H1 (cell line): ENCODE measurements at regions of chr3 and their contacts with region 1.

Region 1: GRCh38 chr3:51670823-51671733 is at the start of gene TEX264:
- DNase-seq: peak in 1 of 2 experiments; percentile 82
- H3K4me3 ChIP-seq: peak within 1 kb of the TSS; percentile 59 to 82 (median 69)
- H3K27ac ChIP-seq: no peak within 1 kb of the TSS
- H3K4me1 ChIP-seq: peaks cover 0 to 10% (median 5%) of the 10 kb centered on the region in 4 experiments; a peak in 4 of 7 replicates
- H3K27me3 ChIP-seq: no peaks in the 10 kb centered on the region
- CTCF ChIP-seq: no peak
- EP300 ChIP-seq: no peak
- POLR2A ChIP-seq: peak in 1 of 2 experiments; percentile 12; a peak in 1 of 3 replicates
- RAD21 ChIP-seq: no peak
- total RNA-seq, gene TEX264: 11.2 and 11.9 TPM in 2 replicates

Region 2: DNA sequence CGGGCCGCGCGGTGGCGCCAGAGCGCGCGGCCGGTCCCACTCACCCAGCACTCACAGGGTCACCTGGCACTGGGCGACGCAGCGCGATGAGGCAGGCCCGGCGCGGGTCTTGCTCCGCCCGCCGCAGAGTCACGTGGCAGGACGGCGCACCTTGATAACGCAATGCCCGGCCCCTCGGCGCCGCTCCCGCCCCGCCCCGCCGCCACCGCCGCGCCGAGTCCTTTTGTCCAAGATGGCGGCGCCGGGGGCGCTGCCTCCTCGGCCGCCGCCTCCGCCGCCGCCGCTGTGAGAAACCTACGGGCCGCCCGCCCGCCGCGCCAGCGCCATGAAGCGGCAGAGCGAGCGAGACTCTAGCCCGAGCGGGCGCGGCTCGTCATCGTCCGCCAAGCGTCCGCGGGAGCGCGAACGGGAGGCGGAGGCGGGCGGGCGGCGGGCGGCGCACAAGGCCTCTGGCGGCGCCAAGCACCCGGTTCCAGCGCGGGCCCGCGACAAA is 280.0 kb before region 1 on chr3 and contains the start of gene RBM15B:
- CTCF ChIA-PET with region 1: interaction called, 17 read pairs
- POLR2A ChIA-PET with region 1: no interaction called
- DNase-seq: peak; percentile 93 to 98
- H3K4me3 ChIP-seq: peak within 1 kb of the TSS; percentile 75 to 90 (median 82)
- H3K27ac ChIP-seq: peak within 1 kb of the TSS; percentile 81
- H3K4me1 ChIP-seq: peaks cover 4 to 30% (median 17%) of the 10 kb centered on the region in 4 experiments
- H3K27me3 ChIP-seq: no peaks in the 10 kb centered on the region
- CTCF ChIP-seq: peak in 1 of 3 experiments; percentile 84; a peak in 2 of 4 replicates
- EP300 ChIP-seq: peak in 1 of 2 experiments; percentile 83; a peak in 1 of 3 replicates
- POLR2A ChIP-seq: peak in 1 of 2 experiments; percentile 94; a peak in 2 of 3 replicates
- RAD21 ChIP-seq: peak; percentile 57 to 62; a peak in 3 of 4 replicates
- total RNA-seq, gene RBM15B: 59.1 and 60.9 TPM in 2 replicates

Region 3: GRCh38 chr3:51637941-51638471 is 33.1 kb before region 1 on chr3:
- CTCF ChIA-PET with region 1: interaction called, 50 read pairs
- POLR2A ChIA-PET with region 1: no interaction called
- DNase-seq: peak; percentile 58 to 67
- H3K4me3 ChIP-seq: no peak overlapping the region
- H3K27ac ChIP-seq: no peak overlapping the region
- H3K4me1 ChIP-seq: no peaks in the 10 kb centered on the region
- H3K27me3 ChIP-seq: no peaks in the 10 kb centered on the region
- CTCF ChIP-seq: peak; percentile 82 to 100 (median 100)
- EP300 ChIP-seq: no peak
- POLR2A ChIP-seq: no peak
- RAD21 ChIP-seq: peak; percentile 84

Region 4: GRCh38 chr3:51657234-51657633 is 13.8 kb before region 1 on chr3:
- CTCF ChIA-PET with region 1: interaction called, 16 read pairs
- POLR2A ChIA-PET with region 1: interaction called, 4 read pairs
- DNase-seq: no peak
- H3K4me3 ChIP-seq: no peak overlapping the region
- H3K27ac ChIP-seq: no peak overlapping the region
- H3K4me1 ChIP-seq: no peaks in the 10 kb centered on the region
- H3K27me3 ChIP-seq: no peaks in the 10 kb centered on the region
- CTCF ChIP-seq: no peak
- EP300 ChIP-seq: no peak
- POLR2A ChIP-seq: no peak
- RAD21 ChIP-seq: no peak

Region 5: GRCh38 chr3:51706788-51707731 is 36.0 kb after region 1 on chr3 and contains the start of gene GRM2:
- CTCF ChIA-PET with region 1: interaction called, 15 read pairs
- POLR2A ChIA-PET with region 1: interaction called, 5 read pairs
- DNase-seq: peak; percentile 53 to 90
- H3K4me3 ChIP-seq: peak within 1 kb of the TSS; percentile 49 to 79 (median 74)
- H3K27ac ChIP-seq: no peak within 1 kb of the TSS
- H3K4me1 ChIP-seq: peaks cover 0 to 34% (median 22%) of the 10 kb centered on the region in 4 experiments; a peak in 6 of 7 replicates
- H3K27me3 ChIP-seq: peaks cover 13 to 24% (median 23%) of the 10 kb centered on the region in 4 experiments; a peak in 6 of 7 replicates
- CTCF ChIP-seq: no peak; a peak in 1 of 4 replicates
- EP300 ChIP-seq: peak in 1 of 2 experiments; percentile 37; a peak in 1 of 3 replicates
- POLR2A ChIP-seq: peak in 1 of 2 experiments; percentile 46; a peak in 1 of 3 replicates
- RAD21 ChIP-seq: peak; percentile 4 to 16; a peak in 1 of 4 replicates
- total RNA-seq, gene GRM2: 3.9 and 4.3 TPM in 2 replicates

Region 6: GRCh38 chr3:51929420-51930003 is 258.4 kb after region 1 on chr3:
- CTCF ChIA-PET with region 1: no interaction called
- POLR2A ChIA-PET with region 1: no interaction called
- DNase-seq: no peak
- H3K4me3 ChIP-seq: no peak overlapping the region
- H3K27ac ChIP-seq: no peak overlapping the region
- H3K4me1 ChIP-seq: no peaks in the 10 kb centered on the region
- H3K27me3 ChIP-seq: no peaks in the 10 kb centered on the region
- CTCF ChIP-seq: no peak
- EP300 ChIP-seq: no peak
- POLR2A ChIP-seq: no peak
- RAD21 ChIP-seq: no peak